Esophagus muscularis mucosa (tissue), 4 donors: ENCODE measurements at regions of chr4 and their contacts with region 1.

Region 1: DNA sequence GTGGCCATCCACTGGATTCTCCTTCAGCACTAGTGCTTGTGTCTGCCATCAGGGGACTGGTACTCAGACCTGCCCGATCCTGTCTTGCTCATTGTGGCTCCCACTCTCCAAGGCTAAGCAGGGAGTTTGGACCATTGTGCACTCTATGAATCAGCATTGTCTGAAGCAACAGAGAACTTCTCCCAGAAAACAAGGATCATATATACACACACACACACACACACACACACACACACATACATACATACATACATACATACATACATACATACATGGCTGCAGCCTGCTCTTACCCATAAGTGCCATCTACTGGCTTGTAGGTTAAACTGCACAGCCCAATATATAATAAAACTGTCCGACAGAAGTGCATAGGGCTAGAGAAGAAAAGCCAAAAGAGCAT is 345.3 kb upstream of the LCORL start:
- DNase-seq: no peak
- H3K4me3 ChIP-seq: no peak overlapping the region
- H3K27ac ChIP-seq: no peak overlapping the region
- H3K4me1 ChIP-seq: no peaks in the 10 kb centered on the region
- H3K27me3 ChIP-seq: no peaks in the 10 kb centered on the region
- CTCF ChIP-seq: peak in 1 of 3 experiments; percentile 35
- EP300 ChIP-seq: no peak
- POLR2A ChIP-seq: no peak

Region 2: GRCh38 chr4:17823871-17824669 is 542.8 kb before region 1 on chr4:
- intact Hi-C with region 1: loop called (anchors 10 kb)
- DNase-seq: no peak
- H3K4me3 ChIP-seq: no peak overlapping the region
- H3K27ac ChIP-seq: no peak overlapping the region
- H3K4me1 ChIP-seq: no peaks in the 10 kb centered on the region
- H3K27me3 ChIP-seq: no peaks in the 10 kb centered on the region
- CTCF ChIP-seq: no peak
- EP300 ChIP-seq: no peak
- POLR2A ChIP-seq: no peak